ENCODE measurements at regions of chr12 and their contacts with region 1.

Region 1: DNA sequence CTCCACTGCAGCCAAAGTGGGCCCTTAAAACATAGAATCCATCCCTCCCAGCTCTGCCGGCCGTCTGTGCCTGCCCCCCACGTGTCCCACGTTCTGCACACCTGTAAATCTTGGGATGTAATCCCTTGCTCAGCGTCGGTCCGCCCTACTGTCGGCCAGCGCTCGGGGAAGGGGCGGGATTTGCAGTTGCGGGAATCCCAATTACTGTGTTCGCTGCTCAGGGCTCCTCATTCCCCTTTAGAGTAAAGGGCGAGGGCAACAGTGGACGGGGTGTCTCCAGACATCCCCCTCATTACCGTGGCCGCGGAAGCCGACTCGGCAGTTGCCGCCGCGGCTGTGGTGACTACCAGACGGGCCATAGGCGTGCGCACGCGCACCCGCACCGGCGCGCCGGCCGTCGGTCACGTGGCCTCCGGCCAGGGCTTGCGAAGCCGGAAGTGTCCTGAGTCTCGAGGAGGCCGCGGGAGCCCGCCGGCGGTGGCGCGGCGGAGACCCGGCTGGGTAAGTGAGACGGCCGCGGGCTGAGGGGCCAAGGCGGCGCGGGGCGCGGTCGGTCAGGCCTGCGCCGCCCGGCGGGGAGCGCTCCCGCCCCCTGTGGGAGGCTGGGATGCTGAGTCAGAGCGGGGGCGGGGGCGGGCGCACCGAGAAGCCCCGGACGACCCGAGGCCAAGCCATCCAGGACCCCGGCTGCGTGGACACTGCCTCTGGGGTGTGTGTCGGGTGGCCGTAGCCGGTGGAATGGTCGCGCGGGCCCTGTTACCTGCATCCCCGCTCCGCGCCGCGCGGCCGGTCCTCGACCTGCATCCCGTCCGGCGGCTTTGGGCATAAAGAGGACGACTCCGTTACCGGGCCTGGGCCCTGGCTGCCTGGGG is at the start of gene TBK1:
- H3K4me3 Mint-ChIP-seq: peak within 1 kb of the TSS; percentile 90
- H3K27ac Mint-ChIP-seq: peak within 1 kb of the TSS; percentile 92
- H3K4me1 Mint-ChIP-seq: peaks cover 32% of the 10 kb centered on the region
- H3K27me3 Mint-ChIP-seq: no peaks in the 10 kb centered on the region

Region 2: GRCh38 chr12:64404470-64405256 is 47.3 kb before region 1 on chr12:
- intact Hi-C with region 1: loop called (anchors 5 kb)
- H3K4me3 Mint-ChIP-seq: peak overlapping the region; percentile 93
- H3K27ac Mint-ChIP-seq: peak overlapping the region; percentile 95
- H3K4me1 Mint-ChIP-seq: peaks cover 19% of the 10 kb centered on the region
- H3K27me3 Mint-ChIP-seq: no peaks in the 10 kb centered on the region